Activated naive CD4-positive, alpha-beta T cell treated with anti-CD3 and anti-CD28 coated beads, Interleukin-2, amount 10 ng/mL, durations not matched to agents 7 days and 5 days (primary cell): ENCODE measurements at regions of chr14 and their contacts with region 1.

Region 1: DNA sequence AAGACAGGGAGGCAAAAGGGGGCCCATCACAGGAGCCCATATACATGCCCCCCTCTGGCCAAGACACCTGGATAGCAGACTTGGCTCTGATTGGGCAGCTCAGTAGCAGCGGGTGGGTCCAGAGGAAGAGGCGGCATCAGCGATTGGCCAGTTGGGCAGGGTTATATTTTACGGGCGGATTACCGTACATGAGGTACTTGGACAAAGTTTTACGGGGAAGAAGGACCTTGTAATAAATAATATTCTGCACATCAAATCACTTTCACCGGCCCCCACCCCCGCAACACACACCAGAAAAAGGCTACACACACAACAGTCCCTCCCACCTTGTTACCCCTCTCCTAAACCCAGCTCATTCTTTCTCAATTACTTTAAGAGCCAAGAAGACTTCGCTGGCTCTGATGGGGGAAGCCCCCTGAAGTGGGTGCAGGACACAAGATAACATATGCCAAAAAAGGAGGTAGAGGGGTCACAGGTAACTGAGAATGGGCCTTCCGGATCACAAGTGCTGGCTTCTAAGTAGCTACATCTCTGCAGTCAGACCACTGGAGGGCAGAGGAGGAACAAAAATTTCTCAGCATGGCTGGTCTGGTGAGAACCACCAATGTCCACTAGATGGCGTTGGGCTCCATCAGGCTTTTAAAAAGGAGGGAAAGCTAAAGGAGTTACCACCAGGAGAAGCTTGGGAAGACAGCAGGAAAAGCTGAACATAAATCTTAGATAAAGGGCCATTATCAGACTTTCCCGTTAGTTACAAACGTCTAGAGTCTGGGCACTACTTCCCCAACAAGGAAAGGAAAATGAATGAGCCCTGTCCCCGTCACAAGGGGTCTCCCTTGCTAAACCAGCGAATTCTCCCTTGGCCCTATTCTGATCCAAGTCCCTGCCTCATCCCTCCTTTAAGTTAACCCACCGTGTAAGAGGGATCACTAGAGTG is 11.4 kb upstream of the CDH24 start:
- DNase-seq: peak; percentile 86
- H3K4me3 Mint-ChIP-seq: peak overlapping the region; percentile 34
- H3K27ac Mint-ChIP-seq: peak overlapping the region; percentile 75
- H3K4me1 Mint-ChIP-seq: peaks cover 39% of the 10 kb centered on the region
- H3K27me3 Mint-ChIP-seq: no peaks in the 10 kb centered on the region

Region 2: GRCh38 chr14:22872033-22872832 is 196.5 kb before region 1 on chr14:
- CTCF ChIA-PET with region 1: no interaction called
- DNase-seq: peak; percentile 82
- H3K4me3 Mint-ChIP-seq: peak overlapping the region; percentile 95
- H3K27ac Mint-ChIP-seq: peak overlapping the region; percentile 97
- H3K4me1 Mint-ChIP-seq: peaks cover 37% of the 10 kb centered on the region
- H3K27me3 Mint-ChIP-seq: no peaks in the 10 kb centered on the region

Region 3: GRCh38 chr14:22986508-22987054 is 82.2 kb before region 1 on chr14:
- CTCF ChIA-PET with region 1: interaction called, 633 read pairs
- DNase-seq: peak; percentile 94
- H3K4me3 Mint-ChIP-seq: no peak overlapping the region
- H3K27ac Mint-ChIP-seq: no peak overlapping the region
- H3K4me1 Mint-ChIP-seq: no peaks in the 10 kb centered on the region
- H3K27me3 Mint-ChIP-seq: no peaks in the 10 kb centered on the region

Region 4: DNA sequence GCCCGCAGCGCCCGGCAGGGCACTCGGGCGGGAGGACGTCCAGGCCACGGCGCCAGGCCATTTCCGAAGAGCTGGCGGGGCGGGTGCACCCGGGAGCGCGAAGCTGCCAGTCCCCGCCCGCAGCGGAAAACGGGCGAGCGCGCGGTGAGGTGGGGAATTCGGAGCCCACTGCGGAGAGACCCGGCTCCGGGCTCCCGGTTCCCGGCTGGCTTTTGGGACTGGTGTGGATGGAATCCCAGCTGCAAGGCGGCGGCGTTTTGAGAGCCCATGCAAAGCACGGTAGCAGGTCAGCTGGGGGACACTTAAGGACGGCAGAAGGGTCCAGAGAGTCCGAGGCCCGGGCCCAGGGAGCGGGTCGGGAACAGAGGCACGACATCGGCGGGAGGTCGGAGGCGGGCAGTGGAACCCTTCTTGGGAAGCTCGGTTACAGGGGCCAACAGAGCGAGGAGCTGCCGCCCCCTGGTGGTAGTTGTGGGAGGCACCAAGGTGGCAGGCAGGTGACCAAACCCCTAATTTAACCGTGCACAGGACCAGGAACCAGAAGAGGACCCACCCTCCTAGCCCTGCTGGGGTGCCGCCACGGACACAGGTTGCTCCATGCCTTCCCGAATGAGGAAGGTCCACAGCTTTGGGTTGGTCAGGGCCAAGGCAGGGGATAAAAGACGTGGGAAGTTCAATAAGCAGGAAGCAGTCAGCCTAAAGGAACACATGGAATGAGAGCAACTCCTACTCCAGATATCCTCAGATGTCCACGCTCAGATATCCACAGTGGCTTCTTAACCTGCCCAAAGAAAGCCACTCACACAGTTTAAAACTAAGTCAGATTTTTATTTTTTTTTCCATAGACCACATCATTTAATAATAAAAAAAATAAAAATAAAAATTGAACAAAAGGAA is 10.7 kb before region 1 on chr14:
- CTCF ChIA-PET with region 1: interaction called, 37 read pairs
- DNase-seq: peak; percentile 92
- H3K4me3 Mint-ChIP-seq: peak overlapping the region; percentile 83
- H3K27ac Mint-ChIP-seq: peak overlapping the region; percentile 71
- H3K4me1 Mint-ChIP-seq: peaks cover 21% of the 10 kb centered on the region
- H3K27me3 Mint-ChIP-seq: peaks cover 25% of the 10 kb centered on the region

Region 5: DNA sequence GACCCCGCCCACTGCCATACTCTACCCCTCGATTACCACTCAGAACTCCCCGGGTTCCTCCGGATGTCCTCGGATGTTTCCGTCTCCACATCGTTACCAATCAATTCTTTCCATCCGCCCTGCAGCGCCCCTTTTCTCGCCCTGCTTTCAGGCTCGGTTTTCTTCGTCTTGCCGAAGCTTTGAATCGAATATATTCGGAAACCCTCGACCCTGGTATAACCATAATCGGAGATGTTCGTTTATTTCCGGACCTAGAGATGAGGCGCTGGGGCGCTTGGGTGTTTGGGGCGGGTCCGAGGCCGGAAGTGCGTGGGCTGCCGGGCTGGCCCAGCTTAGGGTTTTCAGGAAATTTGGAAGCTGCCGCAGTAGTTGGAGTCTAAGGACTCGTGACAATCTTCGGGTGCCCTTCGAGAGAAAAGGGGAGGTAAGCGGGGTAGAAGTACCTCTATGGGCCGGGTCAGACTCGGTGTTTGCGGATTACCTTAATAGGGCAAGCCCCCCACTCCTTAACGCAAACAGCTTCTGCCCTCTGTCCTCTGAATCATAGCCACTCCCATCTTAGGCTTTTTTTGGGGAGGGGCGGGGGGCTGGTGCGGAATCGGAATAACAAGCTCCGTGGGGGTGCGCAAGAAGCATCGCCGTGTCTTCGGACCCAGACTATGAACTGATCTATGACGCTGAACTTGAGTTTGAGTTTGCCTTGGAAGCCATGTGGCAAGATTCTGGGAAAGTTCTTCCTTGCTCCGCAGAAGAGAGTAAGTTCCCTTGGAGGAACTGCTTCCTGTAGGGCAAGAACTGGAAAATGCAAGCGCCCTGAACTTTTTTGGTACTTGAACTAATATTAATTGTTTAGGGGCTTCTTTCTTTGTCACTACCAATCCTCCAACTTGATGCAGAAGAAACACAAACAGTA is 26.7 kb after region 1 on chr14 and contains the start of gene C14orf119:
- CTCF ChIA-PET with region 1: interaction called, 25 read pairs
- DNase-seq: peak; percentile 100
- H3K4me3 Mint-ChIP-seq: no peak within 1 kb of the TSS
- H3K27ac Mint-ChIP-seq: no peak within 1 kb of the TSS
- H3K4me1 Mint-ChIP-seq: peaks cover 30% of the 10 kb centered on the region
- H3K27me3 Mint-ChIP-seq: no peaks in the 10 kb centered on the region

Region 6: DNA sequence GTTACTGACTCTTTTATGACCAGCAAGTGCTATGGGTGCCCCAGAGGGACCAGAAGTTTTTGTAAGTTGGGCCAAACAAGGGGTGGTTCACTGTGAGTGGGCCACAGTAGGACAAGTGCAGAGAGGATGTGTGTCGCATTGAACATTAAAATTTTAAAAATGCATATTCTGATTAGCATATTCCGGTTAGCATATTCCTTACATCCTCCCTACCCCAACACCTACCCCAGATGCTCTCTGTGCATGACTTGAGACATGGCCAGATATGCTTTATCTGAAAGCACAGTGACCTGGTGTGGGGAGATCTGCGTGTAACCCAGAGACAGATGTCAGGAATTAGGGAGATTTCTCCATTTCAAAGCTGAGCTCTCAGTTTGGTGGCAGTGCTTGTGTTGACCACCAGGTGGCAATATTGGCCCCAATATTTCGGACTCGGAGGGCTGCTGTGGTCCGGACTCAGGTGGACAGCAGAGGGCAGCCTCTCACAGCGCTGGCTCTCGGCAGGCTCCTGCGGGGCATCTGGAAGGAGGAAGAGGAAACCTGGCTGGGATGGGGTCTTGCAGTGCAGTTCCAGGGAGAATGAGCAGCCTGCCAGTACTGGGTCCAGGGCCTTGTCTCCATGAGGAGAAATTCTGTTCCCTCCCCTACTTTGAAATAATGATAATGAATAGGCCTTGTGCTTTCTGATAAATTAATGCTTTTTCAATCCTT is 52.0 kb after region 1 on chr14:
- CTCF ChIA-PET with region 1: interaction called, 17 read pairs
- DNase-seq: peak; percentile 89
- H3K4me3 Mint-ChIP-seq: peak overlapping the region; percentile 38
- H3K27ac Mint-ChIP-seq: peak overlapping the region; percentile 98
- H3K4me1 Mint-ChIP-seq: peaks cover 37% of the 10 kb centered on the region
- H3K27me3 Mint-ChIP-seq: peaks cover 22% of the 10 kb centered on the region

Region 7: GRCh38 chr14:23186913-23187654 is 118.3 kb after region 1 on chr14:
- CTCF ChIA-PET with region 1: interaction called, 19 read pairs
- DNase-seq: peak; percentile 51
- H3K4me3 Mint-ChIP-seq: no peak overlapping the region
- H3K27ac Mint-ChIP-seq: no peak overlapping the region
- H3K4me1 Mint-ChIP-seq: no peaks in the 10 kb centered on the region
- H3K27me3 Mint-ChIP-seq: peaks cover 14% of the 10 kb centered on the region

Region 8: GRCh38 chr14:23301288-23301968 is 232.7 kb after region 1 on chr14:
- CTCF ChIA-PET with region 1: interaction called, 12 read pairs
- DNase-seq: peak; percentile 97
- H3K4me3 Mint-ChIP-seq: peak overlapping the region; percentile 97
- H3K27ac Mint-ChIP-seq: peak overlapping the region; percentile 100
- H3K4me1 Mint-ChIP-seq: peaks cover 36% of the 10 kb centered on the region
- H3K27me3 Mint-ChIP-seq: peaks cover 26% of the 10 kb centered on the region